Activated CD4-positive, alpha-beta memory T cell treated with anti-CD3 and anti-CD28 coated beads for 36 hours (primary cell): ENCODE measurements at regions of chr9 and their contacts with region 1.

Region 1: GRCh38 chr9:1875921-1876448 is 139.2 kb upstream of the SMARCA2 start:
- DNase-seq: peak; percentile 88
- H3K4me3 Mint-ChIP-seq: peak overlapping the region; percentile 34
- H3K27ac Mint-ChIP-seq: peak overlapping the region; percentile 48
- H3K4me1 Mint-ChIP-seq: peaks cover 46% of the 10 kb centered on the region
- H3K27me3 Mint-ChIP-seq: peaks cover 25% of the 10 kb centered on the region

Region 2: DNA sequence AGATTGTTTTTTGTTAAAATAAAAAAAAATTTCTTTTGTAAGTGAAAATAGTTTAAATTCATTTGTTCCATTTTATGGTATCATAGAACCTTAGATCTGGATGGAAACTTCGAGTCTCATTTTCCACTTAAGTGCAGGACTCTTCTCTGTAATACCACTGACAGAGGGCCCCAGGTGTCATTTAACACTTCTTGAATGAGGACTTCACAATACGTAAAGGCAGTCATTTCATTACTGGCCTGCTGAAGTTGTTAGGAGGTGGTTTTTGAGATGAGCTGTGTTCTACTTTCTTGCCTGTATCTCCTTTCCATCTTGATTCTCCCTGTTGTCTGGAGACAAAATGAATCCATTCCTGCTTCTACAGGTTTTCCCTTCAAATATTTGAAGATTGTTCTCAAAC is 370.5 kb before region 1 on chr9:
- CTCF ChIA-PET with region 1: no interaction called
- POLR2A ChIA-PET with region 1: no interaction called
- intact Hi-C with region 1: loop called (anchors 1 kb)
- DNase-seq: peak; percentile 16
- H3K4me3 Mint-ChIP-seq: no peak overlapping the region
- H3K27ac Mint-ChIP-seq: no peak overlapping the region
- H3K4me1 Mint-ChIP-seq: peaks cover 7% of the 10 kb centered on the region
- H3K27me3 Mint-ChIP-seq: peaks cover 6% of the 10 kb centered on the region

Region 3: DNA sequence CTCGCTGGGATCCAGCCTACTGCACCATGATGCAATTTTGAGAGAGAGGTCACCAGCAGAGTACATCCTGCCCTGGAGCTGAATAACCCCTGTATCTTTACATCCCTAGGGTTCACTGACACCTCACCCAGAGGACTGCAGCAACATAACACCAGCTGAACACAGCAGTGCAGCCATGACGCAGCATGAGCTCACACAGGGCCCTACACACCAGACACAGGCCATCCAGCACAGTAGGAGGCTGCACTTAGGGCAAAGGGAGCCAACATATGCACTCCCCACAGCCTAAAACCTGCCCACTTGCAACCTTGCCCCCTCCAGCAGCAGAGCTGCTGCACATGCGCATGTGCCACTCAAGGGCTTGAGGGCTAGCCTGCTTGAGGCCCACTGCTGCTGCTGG is 18.2 kb before region 1 on chr9:
- CTCF ChIA-PET with region 1: no interaction called
- POLR2A ChIA-PET with region 1: no interaction called
- intact Hi-C with region 1: no loop called
- DNase-seq: no peak
- H3K4me3 Mint-ChIP-seq: no peak overlapping the region
- H3K27ac Mint-ChIP-seq: no peak overlapping the region
- H3K4me1 Mint-ChIP-seq: peaks cover 13% of the 10 kb centered on the region
- H3K27me3 Mint-ChIP-seq: peaks cover 2% of the 10 kb centered on the region

Region 4: DNA sequence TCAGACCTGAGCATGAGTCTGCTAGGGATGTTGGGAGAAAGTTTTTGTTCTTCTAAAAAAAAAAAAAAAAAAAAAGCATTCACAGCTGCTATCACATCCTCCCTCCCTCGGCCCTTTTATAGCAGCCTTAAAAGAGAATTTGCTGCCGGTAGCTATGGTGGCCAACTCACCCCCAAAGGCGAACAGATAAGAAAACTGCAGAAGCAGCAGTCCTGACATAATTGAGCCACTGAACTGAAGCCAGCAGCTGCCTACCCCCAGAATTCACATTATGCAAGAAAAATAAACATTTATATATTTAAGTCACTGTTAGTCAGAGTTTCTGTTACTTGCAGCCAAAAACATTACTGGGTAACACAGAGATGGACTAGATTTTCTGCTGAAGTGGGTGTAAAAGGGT is 14.8 kb after region 1 on chr9:
- CTCF ChIA-PET with region 1: no interaction called
- POLR2A ChIA-PET with region 1: no interaction called
- intact Hi-C with region 1: no loop called
- DNase-seq: no peak
- H3K4me3 Mint-ChIP-seq: no peak overlapping the region
- H3K27ac Mint-ChIP-seq: no peak overlapping the region
- H3K4me1 Mint-ChIP-seq: no peaks in the 10 kb centered on the region
- H3K27me3 Mint-ChIP-seq: peaks cover 6% of the 10 kb centered on the region

Region 5: GRCh38 chr9:1939926-1940368 is 64.0 kb after region 1 on chr9:
- CTCF ChIA-PET with region 1: interaction called, 8 read pairs
- POLR2A ChIA-PET with region 1: no interaction called
- intact Hi-C with region 1: loop called (anchors 5 kb)
- DNase-seq: peak; percentile 52
- H3K4me3 Mint-ChIP-seq: no peak overlapping the region
- H3K27ac Mint-ChIP-seq: no peak overlapping the region
- H3K4me1 Mint-ChIP-seq: peaks cover 3% of the 10 kb centered on the region
- H3K27me3 Mint-ChIP-seq: peaks cover 9% of the 10 kb centered on the region

Region 6: GRCh38 chr9:2053883-2054845 is 178.2 kb after region 1 on chr9:
- CTCF ChIA-PET with region 1: interaction called, 5 read pairs
- POLR2A ChIA-PET with region 1: interaction called, 19 read pairs
- intact Hi-C with region 1: loop called (anchors 1 kb)
- DNase-seq: peak; percentile 88
- H3K4me3 Mint-ChIP-seq: peak overlapping the region; percentile 34
- H3K27ac Mint-ChIP-seq: peak overlapping the region; percentile 83
- H3K4me1 Mint-ChIP-seq: peaks cover 46% of the 10 kb centered on the region
- H3K27me3 Mint-ChIP-seq: no peaks in the 10 kb centered on the region

Region 7: DNA sequence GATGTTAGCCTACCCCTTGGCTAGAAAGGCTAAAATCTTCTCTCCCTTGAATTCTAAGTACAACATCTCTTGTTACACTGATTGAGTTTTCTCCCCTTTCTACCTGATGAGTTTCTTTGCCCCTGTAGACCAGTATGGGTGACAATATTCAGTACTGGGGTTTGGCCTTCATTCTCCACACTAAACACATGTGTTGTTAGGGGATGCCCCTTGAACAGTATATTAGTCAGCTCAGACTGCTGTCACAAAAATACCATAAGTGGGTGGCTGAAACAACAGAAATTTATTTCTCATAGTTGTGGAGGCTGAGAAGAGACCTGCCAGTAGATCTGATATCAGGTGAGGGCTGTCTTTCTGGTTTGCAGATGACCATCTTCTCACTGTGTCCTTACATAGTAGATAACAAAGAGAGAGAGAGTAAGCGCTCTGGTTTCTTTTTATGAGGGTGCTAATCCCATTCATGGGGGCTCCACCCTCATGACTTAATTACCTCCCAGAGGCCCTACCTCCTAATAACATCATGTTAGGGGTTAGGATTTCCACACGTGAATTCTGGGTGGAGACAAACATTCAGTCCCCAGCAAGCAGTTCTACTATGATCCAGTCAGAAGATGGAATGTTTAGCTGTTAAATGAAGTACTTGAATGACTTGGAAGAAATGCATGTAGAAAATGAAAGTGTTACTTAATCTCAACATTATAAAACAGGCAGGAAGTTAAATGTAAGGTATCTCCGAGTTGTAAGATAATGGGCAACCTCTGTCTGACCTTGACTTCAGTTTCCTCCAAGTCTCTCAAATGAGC is 763.1 kb after region 1 on chr9:
- CTCF ChIA-PET with region 1: no interaction called
- POLR2A ChIA-PET with region 1: no interaction called
- intact Hi-C with region 1: loop called (anchors 2 kb)
- DNase-seq: no peak
- H3K4me3 Mint-ChIP-seq: no peak overlapping the region
- H3K27ac Mint-ChIP-seq: peak overlapping the region; percentile 26
- H3K4me1 Mint-ChIP-seq: peaks cover 13% of the 10 kb centered on the region
- H3K27me3 Mint-ChIP-seq: peaks cover 1% of the 10 kb centered on the region